Posterior vena cava (tissue), 2 donors: ENCODE measurements at regions of chr4 and their contacts with region 1.

Region 1: DNA sequence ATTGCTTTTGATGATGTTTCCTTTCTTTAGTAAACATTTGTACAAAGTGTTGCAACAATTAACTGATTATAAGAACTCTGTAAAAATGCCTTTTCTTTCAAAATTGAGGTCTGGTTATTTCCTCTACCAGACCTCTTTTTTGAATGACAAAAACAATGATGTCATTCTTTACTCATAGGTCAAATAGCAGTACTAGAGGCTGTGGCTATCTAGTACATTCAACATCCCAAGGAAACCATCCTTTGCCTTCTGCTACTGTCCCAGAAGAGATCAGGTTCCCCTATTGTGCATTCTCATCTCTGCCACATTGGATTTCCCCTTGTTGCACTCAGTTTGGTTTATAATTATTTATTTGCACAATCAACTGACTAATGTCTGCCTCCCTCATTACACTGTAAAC is 19.1 kb upstream of the MAD2L1 start:
- DNase-seq: no peak

Region 2: GRCh38 chr4:120238277-120238973 is 152.7 kb after region 1 on chr4:
- intact Hi-C with region 1: no loop called
- DNase-seq: no peak

Region 3: DNA sequence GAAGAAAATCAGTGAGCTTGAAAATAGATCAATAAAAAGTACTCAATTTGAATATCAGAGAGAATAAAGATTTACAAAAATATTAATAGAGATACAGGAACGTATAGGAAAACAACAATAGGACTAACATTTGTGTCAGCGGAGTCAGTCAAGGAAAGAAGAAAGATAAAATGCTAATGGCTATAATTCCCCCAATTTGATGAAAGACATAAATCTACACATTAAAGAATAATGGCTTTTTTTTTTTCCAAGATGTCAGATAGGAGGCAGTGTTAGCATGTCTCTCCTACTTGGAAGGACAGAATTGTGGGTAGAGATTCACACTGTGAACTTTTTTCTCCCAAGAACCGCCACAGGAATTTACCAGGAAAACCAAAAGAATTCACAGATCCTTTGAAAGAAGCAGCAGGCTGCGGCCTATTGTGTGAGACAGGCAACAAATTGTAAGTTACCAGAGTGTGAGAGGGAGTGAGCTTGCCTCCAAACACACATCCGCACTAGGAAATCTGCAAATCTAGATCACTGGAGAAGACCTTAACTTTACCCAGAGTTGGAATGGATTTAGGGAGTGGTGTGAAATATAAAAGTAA is 587.0 kb after region 1 on chr4:
- intact Hi-C with region 1: loop called in 1 of 2 experiments (anchors 10 kb)
- DNase-seq: no peak